HCT116 (cell line): ENCODE measurements at regions of chr14 and their contacts with region 1.

Region 1: GRCh38 chr14:58501214-58501816 is 73.8 kb downstream of the KIAA0586 start:
- DNase-seq: peak; percentile 54
- ATAC-seq: peak; percentile 73
- H3K4me3 ChIP-seq: no peak overlapping the region
- H3K27ac ChIP-seq: no peak overlapping the region
- H3K4me1 ChIP-seq: no peaks in the 10 kb centered on the region
- H3K27me3 ChIP-seq: no peaks in the 10 kb centered on the region
- CTCF ChIP-seq: peak; percentile 59 to 90 (median 80); a peak in 5 of 6 replicates
- POLR2A ChIP-seq: no peak
- RAD21 ChIP-seq: peak; percentile 80

Region 2: DNA sequence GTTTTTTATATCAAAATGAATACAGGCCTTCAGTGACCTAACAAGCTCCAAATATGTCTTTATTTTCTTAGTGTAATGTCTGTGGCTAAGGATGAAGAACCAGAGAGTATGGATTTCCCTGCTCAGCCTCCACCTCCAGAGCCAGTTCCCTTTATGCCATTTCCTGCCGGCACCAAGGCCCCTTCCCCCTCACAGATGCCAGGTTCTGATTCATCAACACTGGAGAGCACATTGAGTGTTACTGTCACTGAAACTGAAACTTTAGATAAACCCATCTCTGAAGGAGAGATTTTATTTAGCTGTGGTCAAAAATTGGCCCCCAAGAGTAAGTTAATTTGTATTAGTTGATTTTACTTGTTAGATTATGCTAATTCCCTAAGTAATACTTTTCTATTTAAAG is 12.8 kb before region 1 on chr14:
- CTCF ChIA-PET with region 1: interaction called, 17 read pairs
- POLR2A ChIA-PET with region 1: interaction called, 3 read pairs
- RAD21 ChIA-PET with region 1: no interaction called
- intact Hi-C with region 1: no loop called
- DNase-seq: no peak
- ATAC-seq: no peak
- H3K4me3 ChIP-seq: no peak overlapping the region
- H3K27ac ChIP-seq: no peak overlapping the region
- H3K4me1 ChIP-seq: no peaks in the 10 kb centered on the region
- H3K27me3 ChIP-seq: no peaks in the 10 kb centered on the region
- CTCF ChIP-seq: no peak
- POLR2A ChIP-seq: no peak
- RAD21 ChIP-seq: no peak

Region 3: DNA sequence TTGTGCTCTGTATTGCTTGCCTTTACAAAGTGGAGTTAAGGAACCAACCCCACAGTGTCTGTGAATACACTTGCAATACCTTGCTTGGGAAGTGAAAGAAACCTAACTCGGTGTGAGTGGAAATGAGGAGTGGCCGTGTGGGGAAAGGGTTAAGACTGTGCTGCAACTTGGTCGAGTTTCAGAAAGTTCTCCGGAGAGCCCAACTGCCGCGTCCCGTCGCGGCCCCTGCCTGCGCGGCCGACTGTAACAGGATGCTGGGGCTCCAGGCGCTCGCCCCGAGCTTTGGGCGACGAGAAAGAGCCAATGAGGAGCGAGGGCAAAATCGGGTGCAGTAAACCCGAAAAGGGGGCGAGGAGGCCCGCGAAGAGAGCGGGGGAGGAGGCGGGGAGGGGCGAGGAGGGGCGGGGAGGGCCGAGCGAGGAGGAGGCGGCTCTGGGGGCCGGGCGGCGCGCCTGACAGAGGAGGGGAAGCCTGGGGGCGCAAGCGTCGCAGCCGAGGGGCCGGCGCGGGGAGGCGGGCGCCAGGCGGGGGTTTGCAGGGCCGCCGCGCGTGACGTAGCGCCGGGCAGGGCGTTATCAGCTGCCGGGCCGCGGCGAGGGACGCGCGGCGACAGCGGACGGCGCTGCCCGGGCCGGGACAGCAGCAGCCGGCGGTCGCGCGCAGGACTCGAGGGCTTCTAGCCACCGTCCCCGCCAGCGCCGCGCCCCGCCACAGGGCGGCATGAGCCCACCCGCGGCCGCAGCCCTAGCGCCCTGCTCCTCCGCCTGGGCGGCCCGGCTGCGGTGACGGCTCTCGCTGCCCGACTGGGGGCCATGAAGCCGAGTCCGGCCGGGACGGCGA is 136.3 kb after region 1 on chr14 and contains the start of gene DACT1:
- CTCF ChIA-PET with region 1: interaction called, 18 read pairs
- POLR2A ChIA-PET with region 1: no interaction called
- RAD21 ChIA-PET with region 1: interaction called, 4 to 5 read pairs
- intact Hi-C with region 1: loop called (anchors 1 kb)
- DNase-seq: no peak
- ATAC-seq: peak; percentile 73
- H3K4me3 ChIP-seq: peak within 1 kb of the TSS; percentile 50 to 61
- H3K27ac ChIP-seq: peak within 1 kb of the TSS; percentile 38; the same call in 1 of the 2 replicates
- H3K4me1 ChIP-seq: peaks cover 7 to 43% of the 10 kb centered on the region in 2 experiments; a peak in 3 of 4 replicates
- H3K27me3 ChIP-seq: peaks cover 3% of the 10 kb centered on the region; the same call in 1 of the 2 replicates
- CTCF ChIP-seq: no peak
- POLR2A ChIP-seq: no peak
- RAD21 ChIP-seq: no peak
- total RNA-seq, gene DACT1: 1.6 TPM

Region 4: GRCh38 chr14:59028476-59029202 is 527.3 kb after region 1 on chr14:
- CTCF ChIA-PET with region 1: interaction called, 11 read pairs
- POLR2A ChIA-PET with region 1: no interaction called
- RAD21 ChIA-PET with region 1: interaction called in 1 of 2 experiments, 4 read pairs
- intact Hi-C with region 1: loop called (anchors 2 kb)
- DNase-seq: peak; percentile 68
- ATAC-seq: peak; percentile 98
- H3K4me3 ChIP-seq: peak overlapping the region in 1 of 2 experiments; percentile 14; a peak in 1 of 4 replicates
- H3K27ac ChIP-seq: no peak overlapping the region
- H3K4me1 ChIP-seq: peaks cover 0 to 9% of the 10 kb centered on the region in 2 experiments; a peak in 2 of 4 replicates
- H3K27me3 ChIP-seq: no peaks in the 10 kb centered on the region
- CTCF ChIP-seq: peak; percentile 80 to 93 (median 90)
- POLR2A ChIP-seq: no peak
- RAD21 ChIP-seq: peak; percentile 91

Region 5: DNA sequence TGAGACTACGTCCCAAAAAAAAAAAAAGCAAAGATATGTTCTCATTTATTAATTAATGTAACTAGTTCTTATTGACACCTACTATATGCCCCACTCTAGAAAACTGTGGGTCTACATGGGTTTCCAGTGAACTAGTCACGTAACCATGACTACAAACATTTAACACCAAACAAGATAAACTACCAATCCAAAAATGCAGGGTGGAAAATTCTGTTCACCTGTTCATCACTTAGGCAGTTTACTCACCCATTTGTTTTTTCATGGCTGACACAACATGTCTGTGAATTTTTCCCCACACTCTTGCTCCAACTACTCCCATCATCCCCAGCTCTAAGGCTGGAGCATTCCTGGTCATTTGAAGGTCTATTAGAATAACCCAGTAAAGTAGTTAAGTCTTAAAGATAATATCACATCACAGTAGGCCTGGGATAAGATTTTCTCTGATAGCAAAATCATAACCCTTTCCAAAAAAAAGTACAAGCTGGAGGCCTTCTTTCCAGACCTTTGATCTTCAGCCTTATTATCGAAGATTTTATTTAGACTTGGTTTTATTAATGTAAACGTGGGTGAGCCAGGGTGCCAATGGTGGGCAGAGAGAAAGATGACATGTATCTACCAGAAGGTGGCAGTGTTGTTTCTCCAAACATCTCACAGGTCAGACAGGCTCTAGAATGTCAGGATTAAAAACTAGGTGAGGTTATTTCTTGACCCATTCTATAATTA is 625.6 kb after region 1 on chr14:
- CTCF ChIA-PET with region 1: interaction called, 24 read pairs
- POLR2A ChIA-PET with region 1: no interaction called
- RAD21 ChIA-PET with region 1: interaction called, 4 to 6 read pairs
- intact Hi-C with region 1: loop called (anchors 2 kb)
- DNase-seq: peak; percentile 61
- ATAC-seq: peak; percentile 97
- H3K4me3 ChIP-seq: no peak overlapping the region
- H3K27ac ChIP-seq: no peak overlapping the region
- H3K4me1 ChIP-seq: no peaks in the 10 kb centered on the region
- H3K27me3 ChIP-seq: no peaks in the 10 kb centered on the region
- CTCF ChIP-seq: peak; percentile 61 to 86 (median 86)
- POLR2A ChIP-seq: no peak
- RAD21 ChIP-seq: peak; percentile 93